ENCODE measurements at regions of chr20 and their contacts with region 1.

Region 1: DNA sequence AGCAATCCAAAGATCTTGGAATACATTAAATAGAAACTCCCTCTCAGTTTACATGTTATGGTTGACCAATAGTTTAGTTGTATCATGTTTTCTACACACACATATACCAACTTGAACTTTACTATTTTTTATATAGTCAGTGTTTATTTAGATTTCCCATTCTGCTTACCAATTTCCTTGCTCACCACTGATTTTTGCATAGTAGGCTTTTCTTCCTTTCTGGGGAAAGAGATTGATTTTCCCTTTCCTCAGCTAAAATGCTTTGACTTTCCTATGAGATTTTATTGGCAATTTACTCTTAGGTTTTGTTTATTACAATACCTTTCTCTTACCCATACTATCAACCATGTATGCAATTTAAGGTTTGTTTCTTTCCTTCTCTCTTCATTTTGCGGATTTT is 665.6 kb downstream of the PTPRT start:
- DNase-seq: no peak

Region 2: GRCh38 chr20:42472198-42472597 is 51.9 kb before region 1 on chr20:
- intact Hi-C with region 1: loop called in 1 of 2 experiments (anchors 2 kb)
- DNase-seq: no peak

Region 3: GRCh38 chr20:44302026-44302669 is 1778.1 kb after region 1 on chr20:
- intact Hi-C with region 1: no loop called
- DNase-seq: no peak